ENCODE measurements at regions of chr22 and their contacts with region 1.

Region 1: GRCh38 chr22:32528984-32529982 is 54.7 kb downstream of the FBXO7 start:
- DNase-seq: peak; percentile 86
- H3K4me3 ChIP-seq: peak overlapping the region; percentile 22
- H3K27ac ChIP-seq: peak overlapping the region; percentile 93
- H3K4me1 ChIP-seq: peaks cover 57% of the 10 kb centered on the region
- H3K27me3 ChIP-seq: no peaks in the 10 kb centered on the region
- CTCF ChIP-seq: peak; percentile 92

Region 2: GRCh38 chr22:32619614-32620426 is 90.5 kb after region 1 on chr22:
- intact Hi-C with region 1: loop called (anchors 5 kb)
- DNase-seq: peak; percentile 64
- H3K4me3 ChIP-seq: no peak overlapping the region
- H3K27ac ChIP-seq: peak overlapping the region; percentile 93
- H3K4me1 ChIP-seq: peaks cover 80% of the 10 kb centered on the region
- H3K27me3 ChIP-seq: no peaks in the 10 kb centered on the region
- CTCF ChIP-seq: no peak

Region 3: GRCh38 chr22:32674925-32675825 is 145.9 kb after region 1 on chr22:
- intact Hi-C with region 1: no loop called
- DNase-seq: peak; percentile 36
- H3K4me3 ChIP-seq: no peak overlapping the region
- H3K27ac ChIP-seq: peak overlapping the region; percentile 14
- H3K4me1 ChIP-seq: peaks cover 18% of the 10 kb centered on the region
- H3K27me3 ChIP-seq: peaks cover 19% of the 10 kb centered on the region
- CTCF ChIP-seq: peak; percentile 41

Region 4: DNA sequence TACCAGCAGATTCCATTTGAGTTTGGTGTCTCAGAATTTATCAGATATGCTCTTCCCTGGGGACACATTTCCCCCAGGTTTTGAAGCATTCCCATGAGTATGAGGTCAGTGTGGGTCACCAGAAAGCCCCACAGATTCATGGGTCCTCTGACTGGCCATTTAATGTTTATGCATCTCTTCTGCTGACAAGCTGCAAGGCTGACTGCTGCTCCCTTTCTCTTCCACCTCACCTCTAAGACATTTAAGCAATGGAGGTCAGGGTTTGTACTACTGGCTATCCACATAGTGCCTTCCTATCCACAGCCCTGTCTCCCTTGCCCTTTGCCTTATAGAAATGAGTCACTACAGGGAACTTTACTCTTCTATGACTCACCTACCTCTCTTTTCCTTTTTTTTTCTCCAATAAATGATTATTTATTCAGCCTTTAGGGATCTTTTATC is 166.2 kb after region 1 on chr22:
- intact Hi-C with region 1: no loop called
- DNase-seq: no peak
- H3K4me3 ChIP-seq: no peak overlapping the region
- H3K27ac ChIP-seq: no peak overlapping the region
- H3K4me1 ChIP-seq: peaks cover 12% of the 10 kb centered on the region
- H3K27me3 ChIP-seq: no peaks in the 10 kb centered on the region
- CTCF ChIP-seq: no peak

Region 5: GRCh38 chr22:32796865-32797573 is 267.7 kb after region 1 on chr22:
- intact Hi-C with region 1: loop called (anchors 5 kb)
- DNase-seq: peak; percentile 63
- H3K4me3 ChIP-seq: no peak overlapping the region
- H3K27ac ChIP-seq: peak overlapping the region; percentile 52
- H3K4me1 ChIP-seq: peaks cover 44% of the 10 kb centered on the region
- H3K27me3 ChIP-seq: no peaks in the 10 kb centered on the region
- CTCF ChIP-seq: peak; percentile 94

Region 6: DNA sequence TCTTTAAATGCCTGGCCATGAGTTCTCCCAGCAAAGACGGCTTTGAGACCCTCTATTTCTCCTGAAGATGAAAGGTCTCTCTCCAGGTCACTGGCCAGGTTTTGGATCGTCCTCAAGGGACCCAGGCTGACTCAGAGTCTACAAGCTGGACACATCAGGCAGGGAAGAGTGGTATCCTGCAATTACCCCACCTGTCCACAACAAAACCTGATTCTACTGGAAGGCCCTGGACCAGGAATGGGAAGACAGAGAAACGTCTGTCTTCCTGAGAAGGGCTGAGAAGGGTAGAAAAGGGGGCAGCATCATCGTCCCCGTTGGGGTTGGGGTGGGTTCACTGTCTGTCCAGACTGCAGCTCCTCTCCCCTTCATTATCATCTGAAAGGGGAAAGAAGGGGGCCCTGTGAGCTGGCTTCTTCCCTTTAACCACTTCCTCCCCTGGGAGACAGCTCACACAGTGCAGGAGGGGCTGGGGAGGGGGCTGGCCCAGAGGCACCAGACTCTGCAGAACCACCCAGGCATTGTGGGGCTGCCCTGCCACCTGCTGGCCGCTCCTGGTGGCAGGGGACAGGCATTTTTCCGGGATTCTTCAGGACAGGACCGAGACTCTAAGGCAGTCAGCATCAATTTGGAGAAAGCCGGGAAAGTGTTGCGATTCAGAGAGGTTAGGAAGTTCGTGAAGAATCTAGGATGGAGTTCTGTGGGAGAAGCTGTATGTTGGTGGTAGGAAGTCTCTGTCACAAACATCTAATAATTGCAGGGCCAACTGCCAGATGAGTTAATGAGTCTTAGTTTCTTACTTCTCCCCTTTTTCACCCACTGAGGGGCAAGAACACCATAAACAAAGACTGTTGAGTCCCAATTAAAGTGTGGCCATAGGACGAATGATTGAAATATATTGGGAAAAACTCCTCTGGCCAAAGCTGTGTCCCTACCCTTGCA is 471.3 kb after region 1 on chr22:
- intact Hi-C with region 1: loop called (anchors 5 kb)
- DNase-seq: peak; percentile 58
- H3K4me3 ChIP-seq: no peak overlapping the region
- H3K27ac ChIP-seq: no peak overlapping the region
- H3K4me1 ChIP-seq: peaks cover 17% of the 10 kb centered on the region
- H3K27me3 ChIP-seq: no peaks in the 10 kb centered on the region
- CTCF ChIP-seq: peak; percentile 94

Measured in left ventricle myocardium inferior (tissue), 1 donor.